ENCODE measurements at regions of chr2 and their contacts with region 1.

Region 1: GRCh38 chr2:216057688-216058193 is 23.9 kb downstream of the PECR start:
- DNase-seq: peak; percentile 80
- ATAC-seq: peak; percentile 98
- H3K4me3 Mint-ChIP-seq: peak overlapping the region; percentile 67
- H3K27ac Mint-ChIP-seq: peak overlapping the region; percentile 87
- H3K4me1 Mint-ChIP-seq: peaks cover 33% of the 10 kb centered on the region
- H3K27me3 Mint-ChIP-seq: no peaks in the 10 kb centered on the region
- CTCF ChIP-seq: no peak

Region 2: DNA sequence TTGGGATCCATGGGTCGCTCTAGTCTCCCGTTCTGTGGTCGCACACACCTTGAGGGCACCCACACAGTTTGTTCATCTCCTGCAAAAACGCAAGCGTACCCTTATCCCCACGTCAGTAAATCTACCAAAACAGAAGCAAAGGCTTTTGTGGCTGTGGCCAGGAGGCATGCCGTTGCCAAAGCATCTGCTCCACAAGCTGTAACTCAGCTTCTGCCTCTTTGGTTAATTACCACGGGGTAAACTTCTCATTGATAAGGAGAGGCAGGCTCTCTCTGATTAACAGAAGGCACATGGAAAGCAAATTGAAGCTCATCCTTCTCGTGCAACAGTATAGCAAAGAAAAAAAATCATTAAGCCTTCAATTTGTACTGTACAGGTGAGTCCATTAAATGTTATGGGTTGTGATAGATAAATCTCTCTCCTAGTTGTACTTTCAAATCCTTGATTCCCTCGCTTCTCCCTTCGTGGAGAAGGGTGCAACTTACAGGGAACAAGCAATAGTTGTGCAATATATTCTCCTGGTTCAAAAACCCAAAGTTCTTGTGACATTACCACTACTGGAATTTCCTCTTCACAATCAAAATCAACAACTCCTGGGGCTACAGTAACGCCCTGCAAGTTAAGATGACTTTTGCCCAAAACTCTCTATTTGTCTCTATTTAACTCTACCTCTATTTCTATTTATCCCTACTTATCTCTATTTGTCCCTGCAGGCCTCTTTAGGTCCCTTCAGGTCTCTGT is 13.5 kb after region 1 on chr2:
- CTCF ChIA-PET with region 1: interaction called, 10 read pairs
- POLR2A ChIA-PET with region 1: no interaction called
- intact Hi-C with region 1: no loop called
- DNase-seq: no peak
- ATAC-seq: no peak
- H3K4me3 Mint-ChIP-seq: no peak overlapping the region
- H3K27ac Mint-ChIP-seq: no peak overlapping the region
- H3K4me1 Mint-ChIP-seq: peaks cover 32% of the 10 kb centered on the region
- H3K27me3 Mint-ChIP-seq: no peaks in the 10 kb centered on the region
- CTCF ChIP-seq: no peak

Region 3: GRCh38 chr2:216081487-216082116 is 23.9 kb after region 1 on chr2 and contains the starts of genes PECR and TMEM169:
- CTCF ChIA-PET with region 1: interaction called, 11 read pairs
- POLR2A ChIA-PET with region 1: no interaction called
- intact Hi-C with region 1: no loop called
- DNase-seq: peak; percentile 82
- ATAC-seq: peak; percentile 91
- H3K4me3 Mint-ChIP-seq: peak within 1 kb of the TSS; percentile 89
- H3K27ac Mint-ChIP-seq: peak within 1 kb of the TSS; percentile 84
- H3K4me1 Mint-ChIP-seq: peaks cover 51% of the 10 kb centered on the region
- H3K27me3 Mint-ChIP-seq: no peaks in the 10 kb centered on the region
- CTCF ChIP-seq: no peak
- total RNA-seq, gene PECR: 21.1 to 22.5 TPM
- total RNA-seq, gene TMEM169: 0.76 to 0.83 TPM